Aorta (tissue), 5 donors: ENCODE measurements at regions of chr1 and their contacts with region 1.

Region 1: DNA sequence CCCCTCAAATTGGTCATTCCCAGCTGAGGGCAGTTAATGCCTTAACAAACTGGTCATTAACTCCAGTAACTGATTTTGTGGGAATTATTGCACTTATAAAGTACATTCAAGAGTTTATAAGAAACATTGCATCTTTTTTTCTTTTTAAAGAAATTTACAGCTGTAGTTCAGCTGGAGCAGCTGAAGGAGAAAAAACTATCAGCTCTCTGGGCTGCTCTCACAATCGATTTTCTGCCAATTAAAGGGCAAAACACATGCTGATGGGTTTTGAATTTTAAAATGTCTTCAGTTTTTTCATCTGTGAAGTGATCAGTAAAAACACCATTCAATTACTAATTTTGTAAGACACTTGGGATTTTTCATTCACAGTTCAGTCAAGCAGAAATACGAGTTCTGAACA is 74.7 kb downstream of the KIFAP3 start:
- DNase-seq: no peak
- ATAC-seq: no peak
- H3K4me3 ChIP-seq: no peak overlapping the region
- H3K27ac ChIP-seq: no peak overlapping the region
- H3K4me1 ChIP-seq: no peaks in the 10 kb centered on the region
- H3K27me3 ChIP-seq: no peaks in the 10 kb centered on the region

Region 2: DNA sequence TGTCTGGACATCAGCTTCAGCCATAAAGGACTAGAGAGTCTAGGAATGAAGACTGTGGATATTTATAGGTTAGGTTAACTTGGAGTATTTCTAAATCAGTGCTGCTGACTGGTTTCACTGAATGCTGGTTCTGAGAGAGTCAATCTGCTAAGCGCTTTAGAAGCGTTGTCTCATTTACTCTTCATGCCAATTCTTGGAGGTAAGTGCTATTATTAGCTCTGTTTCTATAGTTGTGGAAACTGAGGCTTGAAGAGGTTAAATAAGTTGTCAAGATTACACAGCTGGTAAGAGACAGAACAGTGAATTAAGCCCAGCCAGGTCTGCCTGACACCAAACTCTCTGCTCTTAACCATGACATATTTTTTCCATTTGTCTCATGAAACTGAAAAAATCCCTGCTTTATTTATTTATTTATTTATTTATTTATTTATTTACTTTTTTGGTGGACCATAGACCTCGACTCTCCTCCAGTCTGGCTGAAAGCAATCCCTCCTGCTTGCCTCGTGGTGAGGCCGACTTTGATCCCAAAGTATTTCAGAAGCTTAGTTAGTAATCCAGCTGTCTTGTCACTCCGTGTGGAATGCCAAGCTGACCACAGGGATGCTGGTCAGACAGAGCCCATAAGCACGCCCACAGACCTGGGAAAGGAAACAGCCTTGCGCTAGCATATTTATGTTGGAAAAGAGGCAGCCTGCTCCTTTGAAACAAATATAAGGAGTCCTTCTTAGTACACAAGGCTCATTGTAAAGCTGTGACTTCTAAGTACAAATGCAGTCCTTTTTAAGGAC is 162.9 kb after region 1 on chr1:
- intact Hi-C with region 1: no loop called
- DNase-seq: peak; percentile 64 to 78
- ATAC-seq: no peak
- H3K4me3 ChIP-seq: peak overlapping the region in 1 of 2 donors; percentile 72
- H3K27ac ChIP-seq: peak overlapping the region in 1 of 2 donors; percentile 64
- H3K4me1 ChIP-seq: no peaks in the 10 kb centered on the region
- H3K27me3 ChIP-seq: no peaks in the 10 kb centered on the region

Region 3: DNA sequence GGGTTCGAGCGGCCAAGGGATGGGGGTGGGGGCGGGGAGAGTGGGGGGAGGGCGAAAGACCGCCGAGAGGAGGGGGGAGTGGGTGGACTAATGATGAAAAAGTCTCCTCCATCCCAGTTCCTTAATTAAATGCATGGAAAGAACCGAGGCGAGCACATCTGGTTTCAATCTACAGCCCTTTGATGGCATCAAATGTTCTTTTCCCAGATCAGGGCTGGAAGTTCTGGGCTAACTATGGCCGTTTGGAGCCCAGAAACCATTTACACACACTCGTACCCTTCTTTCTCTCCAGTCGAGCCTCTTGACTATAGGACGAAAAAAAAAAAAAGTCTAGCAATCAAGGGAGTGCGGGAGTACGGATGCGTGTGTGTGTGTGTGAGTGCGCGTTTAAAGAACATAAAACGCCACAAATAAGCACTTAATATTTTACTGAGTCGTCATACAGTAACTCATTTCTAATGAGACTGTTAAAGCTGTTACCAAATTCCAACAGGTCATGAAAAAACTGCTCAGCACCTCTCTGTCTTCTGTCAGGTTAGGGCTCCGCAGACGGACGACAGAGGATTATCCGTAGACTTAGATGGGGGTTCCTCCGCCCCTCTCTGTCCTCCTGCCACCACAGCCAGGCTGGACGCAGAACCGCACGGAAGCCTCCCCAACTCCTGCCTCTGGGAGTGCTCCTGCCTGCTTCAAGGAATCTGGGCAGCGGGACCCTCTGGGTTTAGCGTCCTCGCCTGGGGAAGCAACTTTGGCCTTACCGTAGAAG is 662.1 kb after region 1 on chr1:
- intact Hi-C with region 1: no loop called
- DNase-seq: peak; percentile 74 to 82
- ATAC-seq: peak; percentile 12
- H3K4me3 ChIP-seq: peak overlapping the region; percentile 90 to 91
- H3K27ac ChIP-seq: no peak overlapping the region
- H3K4me1 ChIP-seq: no peaks in the 10 kb centered on the region
- H3K27me3 ChIP-seq: no peaks in the 10 kb centered on the region

Region 4: GRCh38 chr1:170864238-170864637 is 864.5 kb after region 1 on chr1:
- intact Hi-C with region 1: loop called in 1 of 2 experiments (anchors 10 kb)
- DNase-seq: peak in 1 of 2 donors; percentile 63
- ATAC-seq: peak; percentile 87
- H3K4me3 ChIP-seq: no peak overlapping the region
- H3K27ac ChIP-seq: no peak overlapping the region
- H3K4me1 ChIP-seq: peaks cover 0 to 6% of the 10 kb centered on the region in 2 donors
- H3K27me3 ChIP-seq: no peaks in the 10 kb centered on the region